Caco-2 (cell line): ENCODE measurements at regions of chr11 and their contacts with region 1.

Region 1: DNA sequence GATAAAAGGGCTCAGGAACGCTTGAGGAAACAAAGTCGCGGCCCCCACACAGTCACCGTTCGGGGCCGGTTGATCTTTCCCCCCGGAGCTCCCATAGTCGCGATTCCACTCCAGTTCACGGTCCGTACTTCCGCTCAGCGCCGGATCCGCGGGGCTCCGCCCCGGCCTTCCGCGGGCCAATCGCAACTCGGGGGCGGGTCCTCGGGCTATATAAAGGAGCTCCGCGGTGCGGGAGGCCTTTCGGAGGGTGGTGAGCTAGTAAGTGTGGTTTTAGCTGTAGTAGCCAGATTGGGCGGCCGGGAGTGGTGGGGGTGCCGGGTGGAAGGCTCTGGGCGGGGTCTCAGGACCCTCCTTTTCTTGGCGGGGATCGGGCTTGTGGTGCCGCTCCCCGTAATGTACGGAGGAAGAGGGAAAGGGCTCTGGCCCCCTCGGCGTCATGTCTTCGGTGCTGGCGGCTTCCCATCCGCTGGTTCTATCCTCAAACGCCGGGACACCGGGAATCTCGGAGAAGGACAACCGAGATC is at the starts of genes C11orf98 and CSKMT:
- DNase-seq: peak; percentile 95 to 99
- H3K4me3 ChIP-seq: peak within 1 kb of the TSS; percentile 50
- H3K4me3 Mint-ChIP-seq: peak within 1 kb of the TSS; percentile 99
- H3K27ac Mint-ChIP-seq: peak within 1 kb of the TSS; percentile 97
- H3K4me1 ChIP-seq: peaks cover 15% of the 10 kb centered on the region
- H3K4me1 Mint-ChIP-seq: peaks cover 5% of the 10 kb centered on the region
- H3K27me3 ChIP-seq: no peaks in the 10 kb centered on the region
- H3K27me3 Mint-ChIP-seq: no peaks in the 10 kb centered on the region
- CTCF ChIP-seq: no peak
- total RNA-seq, gene C11orf98: 115 and 123 TPM in 2 replicates
- total RNA-seq, gene CSKMT: 38.2 and 40.1 TPM in 2 replicates

Region 2: GRCh38 chr11:62487738-62488551 is 177.2 kb before region 1 on chr11:
- CTCF ChIA-PET with region 1: no interaction called
- POLR2A ChIA-PET with region 1: no interaction called
- intact Hi-C with region 1: no loop called
- DNase-seq: no peak
- H3K4me3 ChIP-seq: no peak overlapping the region
- H3K4me3 Mint-ChIP-seq: no peak overlapping the region
- H3K27ac Mint-ChIP-seq: peak overlapping the region; percentile 70
- H3K4me1 ChIP-seq: peaks cover 49% of the 10 kb centered on the region
- H3K4me1 Mint-ChIP-seq: peaks cover 63% of the 10 kb centered on the region
- H3K27me3 ChIP-seq: no peaks in the 10 kb centered on the region
- H3K27me3 Mint-ChIP-seq: no peaks in the 10 kb centered on the region
- CTCF ChIP-seq: no peak

Region 3: GRCh38 chr11:62601394-62602140 is 63.6 kb before region 1 on chr11 and contains the start of gene MTA2:
- CTCF ChIA-PET with region 1: interaction called, 4 read pairs
- POLR2A ChIA-PET with region 1: interaction called, 24 read pairs
- intact Hi-C with region 1: no loop called
- DNase-seq: peak; percentile 99 to 100
- H3K4me3 ChIP-seq: peak within 1 kb of the TSS; percentile 97
- H3K4me3 Mint-ChIP-seq: peak within 1 kb of the TSS; percentile 88
- H3K27ac Mint-ChIP-seq: peak within 1 kb of the TSS; percentile 89
- H3K4me1 ChIP-seq: peaks cover 35% of the 10 kb centered on the region
- H3K4me1 Mint-ChIP-seq: peaks cover 36% of the 10 kb centered on the region
- H3K27me3 ChIP-seq: no peaks in the 10 kb centered on the region
- H3K27me3 Mint-ChIP-seq: no peaks in the 10 kb centered on the region
- CTCF ChIP-seq: no peak
- total RNA-seq, gene MTA2: 134 and 135 TPM in 2 replicates

Region 4: GRCh38 chr11:62621567-62622470 is 43.3 kb before region 1 on chr11 and contains the start of gene B3GAT3:
- CTCF ChIA-PET with region 1: interaction called, 7 read pairs
- POLR2A ChIA-PET with region 1: interaction called, 32 read pairs
- intact Hi-C with region 1: loop called (anchors 2 kb)
- DNase-seq: peak; percentile 100
- H3K4me3 ChIP-seq: peak within 1 kb of the TSS; percentile 81
- H3K4me3 Mint-ChIP-seq: peak within 1 kb of the TSS; percentile 91
- H3K27ac Mint-ChIP-seq: peak within 1 kb of the TSS; percentile 81
- H3K4me1 ChIP-seq: peaks cover 13% of the 10 kb centered on the region
- H3K4me1 Mint-ChIP-seq: peaks cover 7% of the 10 kb centered on the region
- H3K27me3 ChIP-seq: no peaks in the 10 kb centered on the region
- H3K27me3 Mint-ChIP-seq: no peaks in the 10 kb centered on the region
- CTCF ChIP-seq: no peak
- total RNA-seq, gene B3GAT3: 37.2 and 37.6 TPM in 2 replicates

Region 5: GRCh38 chr11:62652161-62653006 is 12.8 kb before region 1 on chr11:
- CTCF ChIA-PET with region 1: interaction called, 7 read pairs
- POLR2A ChIA-PET with region 1: interaction called, 56 read pairs
- intact Hi-C with region 1: loop called (anchors 1 kb)
- DNase-seq: no peak
- H3K4me3 ChIP-seq: peak overlapping the region; percentile 80
- H3K4me3 Mint-ChIP-seq: peak overlapping the region; percentile 75
- H3K27ac Mint-ChIP-seq: peak overlapping the region; percentile 95
- H3K4me1 ChIP-seq: peaks cover 10% of the 10 kb centered on the region; the same call in 1 of the 2 replicates
- H3K4me1 Mint-ChIP-seq: peaks cover 7% of the 10 kb centered on the region
- H3K27me3 ChIP-seq: no peaks in the 10 kb centered on the region
- H3K27me3 Mint-ChIP-seq: no peaks in the 10 kb centered on the region
- CTCF ChIP-seq: no peak

Region 6: DNA sequence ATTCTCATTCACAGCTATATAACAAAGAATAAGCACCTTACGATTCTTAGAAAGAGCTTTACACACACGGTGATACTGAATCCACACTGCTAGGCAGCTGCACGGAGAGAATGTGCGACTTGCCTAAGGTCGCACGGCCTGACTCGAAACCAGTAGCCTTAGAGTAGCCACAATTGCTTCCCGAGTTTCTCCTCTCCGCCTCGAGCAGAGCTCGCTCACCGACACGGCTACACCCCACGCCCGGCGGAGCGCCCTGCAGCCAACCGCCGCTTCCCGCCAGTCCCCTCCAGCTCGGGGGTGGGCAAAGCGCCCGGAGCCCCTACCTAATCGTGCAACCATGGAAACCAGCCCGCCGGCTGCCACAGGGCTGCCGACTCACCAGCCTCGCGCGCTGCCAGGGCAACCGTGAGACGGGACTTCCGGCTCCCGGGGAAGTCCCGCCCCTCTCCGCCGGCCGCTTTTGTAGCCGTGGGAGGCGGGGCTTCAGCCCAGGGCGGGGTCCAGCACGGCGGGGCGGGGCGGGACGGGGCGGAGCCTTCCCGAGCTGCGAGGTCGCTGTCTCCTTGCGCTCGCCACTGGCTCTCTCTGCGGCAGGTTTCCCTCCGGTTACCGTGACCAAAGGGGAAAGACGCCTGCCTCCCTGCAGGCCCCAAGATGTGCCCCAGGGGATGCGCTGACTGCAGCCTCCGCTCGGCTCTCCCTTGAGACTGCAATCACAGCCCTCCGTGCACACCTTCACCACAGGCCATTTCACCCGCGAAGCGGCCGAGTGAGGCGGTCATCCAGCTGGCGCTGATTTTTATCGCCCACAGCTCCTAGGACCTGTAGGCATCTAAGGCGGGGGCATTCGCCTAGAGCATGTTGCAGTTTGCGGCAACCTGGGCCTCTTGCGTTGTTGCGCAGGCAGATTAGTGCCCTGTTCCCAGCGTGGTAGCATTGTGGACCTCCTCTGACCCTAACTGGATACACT is 41.0 kb after region 1 on chr11:
- CTCF ChIA-PET with region 1: no interaction called
- POLR2A ChIA-PET with region 1: interaction called, 15 read pairs
- intact Hi-C with region 1: no loop called
- DNase-seq: peak; percentile 91 to 95
- H3K4me3 ChIP-seq: peak overlapping the region; percentile 55
- H3K4me3 Mint-ChIP-seq: peak overlapping the region; percentile 96
- H3K27ac Mint-ChIP-seq: peak overlapping the region; percentile 97
- H3K4me1 ChIP-seq: peaks cover 9% of the 10 kb centered on the region; the same call in 1 of the 2 replicates
- H3K4me1 Mint-ChIP-seq: peaks cover 18% of the 10 kb centered on the region
- H3K27me3 ChIP-seq: no peaks in the 10 kb centered on the region
- H3K27me3 Mint-ChIP-seq: no peaks in the 10 kb centered on the region
- CTCF ChIP-seq: no peak